Gastrocnemius medialis (tissue), 4 donors: ENCODE measurements at regions of chr9 and their contacts with region 1.

Region 1: GRCh38 chr9:128455849-128456612 is at the start of gene ODF2:
- DNase-seq: peak; percentile 94 to 95
- ATAC-seq: peak; percentile 95 to 97
- H3K4me3 ChIP-seq: peak within 1 kb of the TSS; percentile 69 to 97 (median 76)
- H3K27ac ChIP-seq: peak within 1 kb of the TSS; percentile 58 to 80 (median 73)
- H3K4me1 ChIP-seq: peaks cover 0 to 10% of the 10 kb centered on the region in 2 donors
- H3K27me3 ChIP-seq: peaks cover 6 to 15% (median 13%) of the 10 kb centered on the region in 3 donors
- CTCF ChIP-seq: no peak
- POLR2A ChIP-seq: peak; percentile 50 to 55
- total RNA-seq, gene ODF2: 8.5 to 11.0 (median 9.9) TPM

Region 2: GRCh38 chr9:128322404-128323211 is 133.4 kb before region 1 on chr9 and contains the starts of genes COQ4 and TRUB2:
- in situ Hi-C with region 1: no loop called
- intact Hi-C with region 1: loop called (anchors 2 kb)
- DNase-seq: peak; percentile 91 to 92
- ATAC-seq: peak; percentile 99
- H3K4me3 ChIP-seq: peak within 1 kb of the TSS; percentile 75 to 97 (median 94)
- H3K27ac ChIP-seq: peak within 1 kb of the TSS; percentile 83 to 95 (median 92)
- H3K4me1 ChIP-seq: peaks cover 16 to 35% of the 10 kb centered on the region in 2 donors
- H3K27me3 ChIP-seq: no peaks in the 10 kb centered on the region
- CTCF ChIP-seq: peak in 1 of 5 experiments; percentile 18
- POLR2A ChIP-seq: no peak
- total RNA-seq, gene COQ4: 25.1 to 42.4 (median 34.3) TPM
- total RNA-seq, gene TRUB2: 7.1 to 18.1 (median 14.3) TPM

Region 3: DNA sequence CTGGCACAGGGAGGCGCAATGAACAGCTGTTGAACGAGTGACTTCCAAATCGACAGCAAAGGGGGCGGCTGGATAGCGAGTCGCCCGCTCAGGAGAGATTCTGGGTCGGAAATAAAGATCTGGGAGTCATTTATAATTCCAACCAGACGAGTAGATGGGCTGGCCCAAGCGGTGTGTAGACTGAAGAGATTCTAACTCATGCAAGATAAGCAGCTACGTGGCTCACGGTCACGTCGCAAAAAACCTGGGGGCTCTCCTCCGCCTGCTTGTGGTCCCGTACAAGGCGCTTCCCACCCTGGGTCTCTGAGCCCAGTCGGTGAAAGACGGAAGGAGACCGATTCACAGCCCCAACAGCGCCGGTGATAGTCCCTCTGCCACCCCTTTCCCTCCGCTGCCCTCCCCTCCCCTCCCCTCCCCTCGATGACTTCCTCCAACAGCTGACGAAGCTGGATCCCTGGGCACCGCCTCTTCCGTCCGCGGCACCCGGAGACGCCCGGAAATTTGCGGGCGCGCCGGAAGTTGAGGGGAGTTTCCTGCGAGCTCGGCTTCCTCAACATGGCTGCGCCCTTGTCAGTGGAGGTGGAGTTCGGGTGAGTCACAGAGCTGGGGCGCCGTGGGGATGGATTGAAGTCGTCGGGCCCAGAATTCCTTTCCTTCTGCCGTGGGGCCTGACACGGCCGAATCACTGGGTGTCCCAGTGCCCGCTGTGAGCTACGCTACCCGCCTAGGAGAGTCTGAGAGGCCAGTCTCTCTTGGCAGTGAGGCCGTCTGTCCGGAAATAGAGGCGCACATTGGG is 85.0 kb before region 1 on chr9 and contains the start of gene URM1:
- in situ Hi-C with region 1: no loop called
- intact Hi-C with region 1: loop called (anchors 5 kb)
- DNase-seq: peak; percentile 87 to 94
- ATAC-seq: peak; percentile 97
- H3K4me3 ChIP-seq: peak within 1 kb of the TSS; percentile 73 to 87 (median 78)
- H3K27ac ChIP-seq: peak within 1 kb of the TSS; percentile 85 to 94 (median 92)
- H3K4me1 ChIP-seq: peaks cover 16 to 17% of the 10 kb centered on the region in 2 donors
- H3K27me3 ChIP-seq: no peaks in the 10 kb centered on the region
- CTCF ChIP-seq: no peak
- POLR2A ChIP-seq: peak; percentile 87 to 93
- total RNA-seq, gene URM1: 24.1 to 34.1 (median 32.9) TPM

Region 4: DNA sequence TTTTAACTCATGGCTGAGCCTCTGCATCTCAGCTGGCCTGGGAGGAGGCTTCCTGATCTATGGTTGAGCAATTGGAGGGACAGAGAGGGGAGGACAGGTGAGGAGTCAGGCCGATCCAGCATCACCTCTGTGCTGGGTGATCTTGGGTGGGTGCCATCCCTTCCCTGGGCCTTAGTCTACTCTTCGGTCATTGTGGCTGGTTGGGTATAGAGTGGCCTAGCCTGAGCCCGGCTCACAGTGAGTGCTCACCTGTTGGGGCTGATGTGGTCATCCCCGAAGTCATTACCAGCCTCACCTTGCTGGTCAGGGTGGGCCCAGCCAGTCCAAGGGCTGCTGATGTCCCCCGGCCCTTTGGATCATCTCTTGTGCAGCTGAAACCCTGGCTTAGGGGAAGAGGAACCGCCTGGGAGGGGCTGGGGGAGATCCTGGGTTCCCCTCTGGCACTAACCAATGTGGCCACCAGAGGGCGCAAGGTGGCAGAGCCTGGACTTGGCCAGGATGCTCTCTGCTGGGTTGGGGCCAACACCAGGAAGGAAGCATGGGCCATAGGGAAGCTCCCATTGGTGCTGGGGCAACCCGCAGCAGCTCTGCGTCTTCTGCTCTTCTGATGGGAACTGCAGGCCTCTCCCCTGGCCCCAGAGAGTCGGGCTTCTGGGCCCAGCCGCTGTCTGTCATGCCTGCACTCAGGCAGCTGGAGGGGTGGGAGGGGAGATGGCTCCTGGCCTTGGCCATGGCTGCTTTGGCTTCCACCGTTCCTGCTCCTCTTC is 17.5 kb before region 1 on chr9:
- in situ Hi-C with region 1: no loop called
- intact Hi-C with region 1: loop called (anchors 1 kb)
- DNase-seq: peak; percentile 61 to 68
- ATAC-seq: peak; percentile 87 to 95
- H3K4me3 ChIP-seq: no peak overlapping the region
- H3K27ac ChIP-seq: no peak overlapping the region
- H3K4me1 ChIP-seq: no peaks in the 10 kb centered on the region
- H3K27me3 ChIP-seq: no peaks in the 10 kb centered on the region
- CTCF ChIP-seq: peak; percentile 68 to 93 (median 89)
- POLR2A ChIP-seq: no peak

Region 5: DNA sequence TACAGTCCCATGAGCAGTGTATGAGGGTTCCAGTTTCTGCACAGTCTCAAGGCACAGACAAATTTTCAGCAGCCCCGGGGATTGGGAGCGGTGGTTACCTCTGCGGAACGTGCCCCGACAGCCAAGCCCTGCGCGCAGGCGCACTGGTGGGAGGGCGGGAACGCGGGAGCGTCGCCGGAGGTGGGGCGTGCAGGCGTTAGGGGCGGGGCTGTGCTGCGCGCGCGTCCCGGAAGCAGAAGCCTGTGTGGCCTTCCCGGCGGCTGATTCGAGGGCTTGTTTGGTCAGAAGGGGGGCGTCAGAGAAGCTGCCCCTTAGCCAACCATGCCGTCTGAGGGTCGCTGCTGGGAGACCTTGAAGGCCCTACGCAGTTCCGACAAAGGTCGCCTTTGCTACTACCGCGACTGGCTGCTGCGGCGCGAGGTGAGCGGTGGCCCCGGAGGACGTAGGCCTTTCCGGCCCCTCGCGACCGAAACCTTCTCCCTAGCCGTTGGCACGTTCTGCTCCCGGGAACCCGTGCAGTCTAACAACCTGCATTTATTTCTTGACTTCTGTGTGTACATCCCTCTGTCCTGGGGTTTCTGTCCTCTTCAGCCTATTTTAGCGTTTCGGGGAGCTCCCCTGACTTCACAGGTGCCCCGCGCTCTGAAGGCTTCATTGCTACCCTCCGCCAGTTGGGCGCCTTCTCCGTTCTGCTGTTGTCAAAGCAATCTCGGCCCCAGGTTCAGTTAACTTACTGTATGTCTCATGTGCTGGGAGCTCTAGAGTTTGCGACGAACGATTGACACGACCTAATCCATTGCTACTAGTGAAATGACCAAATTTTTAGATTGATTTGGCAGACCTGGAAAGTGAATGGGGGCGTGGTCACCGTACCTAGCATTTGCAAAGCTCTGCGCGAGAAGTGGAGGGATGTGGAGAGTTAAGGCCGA is 48.7 kb after region 1 on chr9 and contains the start of gene GLE1:
- in situ Hi-C with region 1: no loop called
- intact Hi-C with region 1: loop called (anchors 1 kb)
- DNase-seq: peak; percentile 86 to 91
- ATAC-seq: peak; percentile 94 to 97
- H3K4me3 ChIP-seq: peak within 1 kb of the TSS; percentile 78 to 95 (median 88)
- H3K27ac ChIP-seq: peak within 1 kb of the TSS; percentile 82 to 93 (median 84)
- H3K4me1 ChIP-seq: peaks cover 15 to 18% of the 10 kb centered on the region in 2 donors
- H3K27me3 ChIP-seq: no peaks in the 10 kb centered on the region
- CTCF ChIP-seq: no peak
- POLR2A ChIP-seq: peak; percentile 30 to 68
- total RNA-seq, gene GLE1: 31.4 to 56.7 (median 32.7) TPM